ENCODE measurements at regions of chr19 and their contacts with region 1.

Region 1: GRCh38 chr19:1239798-1240737 is 1.5 kb upstream of the ATP5F1D start:
- DNase-seq: peak; percentile 97

Region 2: GRCh38 chr19:1221141-1221903 is 18.7 kb before region 1 on chr19:
- intact Hi-C with region 1: loop called in 1 of 2 experiments (anchors 2 kb)
- DNase-seq: peak; percentile 91

Region 3: DNA sequence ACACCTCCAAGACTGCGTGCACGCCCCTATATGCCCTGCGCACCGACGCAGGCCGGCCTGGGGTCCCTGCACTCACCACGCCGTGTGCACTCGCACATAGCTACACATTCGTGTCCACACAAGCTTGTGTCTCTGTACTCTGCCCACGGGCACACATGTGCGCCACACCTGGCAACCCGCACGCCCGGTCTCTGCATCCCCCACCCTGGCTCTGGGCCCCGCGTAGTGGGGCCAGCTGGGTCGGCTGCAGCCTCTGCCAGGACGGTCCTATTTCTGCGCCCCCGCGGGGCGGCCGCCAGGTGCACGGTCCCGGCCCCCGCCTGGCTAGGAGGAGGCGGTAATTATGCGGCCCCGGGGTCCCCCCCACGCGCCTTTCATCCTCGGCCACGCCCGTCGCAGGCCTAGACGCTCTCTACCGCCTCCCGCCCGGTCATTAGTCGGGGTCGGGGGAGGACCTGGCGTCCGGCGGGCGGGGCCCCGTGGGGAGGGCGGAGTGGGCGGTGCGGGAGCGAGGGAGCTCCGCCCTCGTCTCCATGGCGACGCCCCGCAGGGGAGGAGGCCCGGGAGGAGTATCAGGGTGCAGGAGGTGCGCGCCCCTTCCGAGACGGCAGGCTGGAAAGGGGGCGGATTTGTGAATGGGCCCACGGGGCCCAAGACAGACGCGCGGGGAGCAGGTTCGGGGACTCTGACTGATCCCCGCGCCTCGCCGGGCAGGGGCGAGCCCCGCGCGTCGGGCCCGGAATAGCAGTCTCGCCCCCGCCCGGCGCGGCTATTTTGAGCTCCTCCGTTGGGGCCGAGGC is 26.2 kb after region 1 on chr19:
- intact Hi-C with region 1: loop called (anchors 1 to 2 kb)
- DNase-seq: peak; percentile 97